ENCODE measurements at regions of chr17 and their contacts with region 1.

Region 1: GRCh38 chr17:21457051-21458026 is 81.2 kb downstream of the KCNJ12 start:
- DNase-seq: peak; percentile 91
- H3K4me3 ChIP-seq: no peak overlapping the region
- H3K27ac ChIP-seq: peak overlapping the region in 1 of 4 donors; percentile 20
- H3K4me1 ChIP-seq: peaks cover 0 to 13% (median 10%) of the 10 kb centered on the region in 4 donors
- H3K27me3 ChIP-seq: peaks cover 0 to 5% (median 0%) of the 10 kb centered on the region in 3 donors
- CTCF ChIP-seq: peak; percentile 65 to 95 (median 72)
- EP300 ChIP-seq: no peak
- POLR2A ChIP-seq: no peak

Region 2: DNA sequence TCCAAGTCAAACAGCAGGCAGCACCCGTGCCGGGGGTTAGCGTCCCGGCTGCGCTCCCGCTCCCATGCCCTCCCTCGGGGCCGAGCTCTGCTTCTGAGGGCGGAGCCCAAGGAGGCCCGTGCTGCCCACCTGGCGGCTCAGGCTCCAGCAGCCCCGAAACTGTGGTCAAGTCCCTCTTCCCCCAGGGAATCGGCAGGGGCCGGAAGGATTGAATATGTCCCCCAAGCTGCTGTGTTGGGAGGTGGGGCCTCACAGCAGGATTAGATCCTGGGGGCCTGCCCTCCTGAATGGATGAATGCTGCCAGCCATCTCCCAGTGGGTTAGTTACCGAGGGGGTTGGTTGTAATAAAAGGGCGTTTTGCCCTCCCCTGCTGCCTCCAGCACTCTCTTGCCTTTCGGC is 138.9 kb before region 1 on chr17:
- intact Hi-C with region 1: loop called (anchors 5 kb)
- DNase-seq: peak; percentile 65
- H3K4me3 ChIP-seq: no peak overlapping the region
- H3K27ac ChIP-seq: no peak overlapping the region
- H3K4me1 ChIP-seq: peaks cover 0 to 9% (median 8%) of the 10 kb centered on the region in 4 donors
- H3K27me3 ChIP-seq: no peaks in the 10 kb centered on the region
- CTCF ChIP-seq: no peak
- EP300 ChIP-seq: no peak
- POLR2A ChIP-seq: no peak

Region 3: DNA sequence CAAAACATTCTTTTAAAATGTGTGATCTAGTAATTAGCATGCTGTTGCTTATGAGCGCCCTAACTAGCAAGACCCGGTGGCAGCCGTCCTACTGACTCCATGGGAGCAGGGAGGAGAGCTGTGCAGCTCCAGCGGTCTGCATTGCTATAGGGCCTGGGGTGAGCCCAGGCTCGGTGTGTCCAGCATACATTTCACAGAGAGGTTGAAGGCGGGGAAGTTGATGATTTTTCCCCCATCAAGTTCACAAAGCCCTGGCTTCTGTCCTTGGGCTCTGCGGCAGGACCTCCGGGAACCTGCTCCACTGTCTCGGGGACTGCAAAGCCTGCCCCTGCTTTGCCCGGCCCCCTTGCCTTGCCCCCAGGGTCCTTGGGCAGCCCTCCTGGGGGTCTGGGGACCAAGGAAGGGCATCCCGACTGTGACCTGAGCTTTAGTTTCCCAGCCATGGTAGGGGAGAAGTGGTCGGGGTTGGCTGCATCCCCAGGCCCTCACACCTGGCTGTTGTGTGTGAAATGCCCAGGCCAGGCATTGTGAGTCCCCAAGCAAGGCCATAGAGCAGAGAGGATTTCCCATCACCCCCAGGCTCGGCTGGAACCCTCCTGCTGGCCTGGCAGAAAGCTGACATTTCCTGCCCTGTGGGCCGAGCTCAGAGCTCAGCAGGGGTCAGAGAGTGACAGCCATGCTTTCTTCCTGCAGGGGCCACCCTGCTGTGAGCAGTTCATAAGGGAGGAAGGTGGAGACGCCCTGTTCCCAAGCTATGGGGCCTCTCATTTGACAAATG is 56.3 kb before region 1 on chr17:
- intact Hi-C with region 1: no loop called
- DNase-seq: no peak
- H3K4me3 ChIP-seq: no peak overlapping the region
- H3K27ac ChIP-seq: peak overlapping the region in 1 of 4 donors; percentile 73
- H3K4me1 ChIP-seq: peaks cover 0 to 33% (median 19%) of the 10 kb centered on the region in 4 donors
- H3K27me3 ChIP-seq: no peaks in the 10 kb centered on the region
- CTCF ChIP-seq: no peak
- EP300 ChIP-seq: no peak
- POLR2A ChIP-seq: no peak

Region 4: GRCh38 chr17:21539146-21539545 is 81.8 kb after region 1 on chr17:
- intact Hi-C with region 1: no loop called
- DNase-seq: no peak
- H3K4me3 ChIP-seq: no peak overlapping the region
- H3K27ac ChIP-seq: no peak overlapping the region
- H3K4me1 ChIP-seq: peaks cover 0 to 12% (median 0%) of the 10 kb centered on the region in 4 donors
- H3K27me3 ChIP-seq: no peaks in the 10 kb centered on the region
- CTCF ChIP-seq: no peak
- EP300 ChIP-seq: no peak
- POLR2A ChIP-seq: no peak